Dorsolateral prefrontal cortex (tissue), 120 donors: ENCODE measurements at regions of chr7 and their contacts with region 1.

Region 1: GRCh38 chr7:96414931-96415292 is 93.0 kb upstream of the SLC25A13 start:
- DNase-seq: peak in 3 of 10 donors; percentile 16 to 68 (median 41)
- H3K4me3 ChIP-seq: no peak overlapping the region
- H3K27ac ChIP-seq: no peak overlapping the region
- H3K27me3 ChIP-seq: no peaks in the 10 kb centered on the region
- CTCF ChIP-seq: peak in 55 of 56 donors; percentile 25 to 78 (median 63)

Region 2: DNA sequence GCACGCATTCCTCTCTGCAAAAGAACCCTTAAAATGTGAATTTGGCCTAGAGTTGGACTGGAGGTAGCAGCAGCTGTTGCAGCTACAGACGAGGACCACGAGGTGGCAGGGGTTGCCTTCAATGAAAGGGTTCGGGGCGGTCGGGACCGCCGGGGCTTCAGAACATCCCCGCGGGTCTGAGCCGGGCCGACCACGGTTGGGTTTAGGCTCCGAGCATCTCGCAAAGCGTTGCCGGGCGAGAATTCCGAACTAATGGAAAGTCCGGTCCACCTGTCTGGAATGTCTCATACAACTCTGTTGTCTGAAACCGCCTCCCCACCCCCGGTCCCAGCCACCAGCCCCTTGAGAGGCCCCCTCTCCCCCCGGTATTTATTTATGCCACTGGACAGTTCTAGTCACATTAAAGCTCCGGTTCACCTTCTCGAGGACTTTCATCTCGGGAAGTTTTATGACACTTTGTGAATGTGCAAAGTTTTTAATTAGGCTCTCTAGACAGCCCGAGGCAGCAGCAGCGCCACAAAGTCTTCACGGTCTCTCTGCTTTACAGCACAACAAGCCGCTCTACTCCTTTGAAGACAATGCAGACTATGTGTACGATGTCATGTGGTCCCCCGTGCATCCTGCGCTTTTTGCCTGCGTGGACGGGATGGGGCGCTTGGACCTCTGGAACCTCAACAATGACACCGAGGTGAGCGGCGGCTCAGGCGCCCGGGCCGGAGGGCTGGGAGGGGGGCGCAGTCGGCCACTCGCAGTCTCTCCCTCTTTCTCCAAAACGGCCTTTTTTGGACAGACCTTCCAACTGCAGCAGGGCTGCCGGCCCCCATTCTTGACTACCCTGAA is 339.2 kb before region 1 on chr7:
- intact Hi-C with region 1: loop called in 1 of 2 experiments (anchors 10 kb)
- DNase-seq: peak; percentile 58 to 76 (median 64)
- H3K4me3 ChIP-seq: peak overlapping the region; percentile 11 to 81 (median 61)
- H3K27ac ChIP-seq: peak overlapping the region in 3 of 59 donors; percentile 19 to 52 (median 37)
- H3K27me3 ChIP-seq: peaks cover 0 to 4% (median 0%) of the 10 kb centered on the region in 45 donors
- CTCF ChIP-seq: peak; percentile 52 to 92 (median 84)

Region 3: GRCh38 chr7:96188174-96188581 is 226.7 kb before region 1 on chr7:
- intact Hi-C with region 1: loop called in 1 of 2 experiments (anchors 10 kb)
- DNase-seq: no peak
- H3K4me3 ChIP-seq: peak overlapping the region in 53 of 59 donors; percentile 0 to 57 (median 27)
- H3K27ac ChIP-seq: peak overlapping the region in 20 of 59 donors; percentile 14 to 72 (median 56)
- H3K27me3 ChIP-seq: no peaks in the 10 kb centered on the region
- CTCF ChIP-seq: no peak